Activated CD4-positive, alpha-beta memory T cell treated with anti-CD3 and anti-CD28 coated beads for 36 hours (primary cell): ENCODE measurements at regions of chr1 and their contacts with region 1.

Region 1: DNA sequence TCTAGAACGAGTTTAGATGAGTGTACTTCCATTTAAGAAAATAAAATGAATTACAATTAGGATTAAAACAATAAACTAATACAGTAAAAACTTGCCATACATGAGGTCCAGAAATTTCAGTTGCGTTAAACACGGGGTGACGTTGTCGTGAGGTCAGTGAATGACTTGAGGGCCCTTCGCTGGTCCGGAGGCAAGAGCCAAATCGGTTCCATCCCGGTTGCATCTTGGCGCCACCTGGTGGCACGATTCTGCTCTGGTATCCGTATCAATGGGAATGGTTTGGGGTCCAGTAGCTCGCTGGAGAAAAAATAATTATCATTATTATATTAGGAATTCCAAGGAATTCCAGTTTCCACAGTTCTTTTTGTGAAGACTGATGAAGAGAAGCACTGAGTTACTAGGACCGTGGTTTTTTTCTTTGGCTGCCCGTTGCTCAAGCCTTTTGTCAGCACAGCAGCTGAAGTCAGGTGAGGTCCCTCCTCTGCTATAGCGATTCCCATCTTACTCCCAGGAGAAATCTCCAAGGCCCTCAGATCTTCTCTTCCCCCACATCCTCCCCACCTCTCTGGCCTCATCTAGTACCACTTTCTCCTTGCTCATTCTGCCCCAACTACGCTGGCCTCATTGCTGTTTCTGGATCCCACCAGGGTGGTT is 161.4 kb downstream of the SLC35F3 start:
- DNase-seq: peak; percentile 76
- H3K4me3 Mint-ChIP-seq: no peak overlapping the region
- H3K27ac Mint-ChIP-seq: no peak overlapping the region
- H3K4me1 Mint-ChIP-seq: no peaks in the 10 kb centered on the region
- H3K27me3 Mint-ChIP-seq: peaks cover 12% of the 10 kb centered on the region

Region 2: GRCh38 chr1:233304489-233305102 is 761.3 kb before region 1 on chr1:
- CTCF ChIA-PET with region 1: interaction called, 18 read pairs
- POLR2A ChIA-PET with region 1: no interaction called
- intact Hi-C with region 1: loop called (anchors 2 kb)
- DNase-seq: no peak
- H3K4me3 Mint-ChIP-seq: no peak overlapping the region
- H3K27ac Mint-ChIP-seq: no peak overlapping the region
- H3K4me1 Mint-ChIP-seq: no peaks in the 10 kb centered on the region
- H3K27me3 Mint-ChIP-seq: peaks cover 1% of the 10 kb centered on the region

Region 3: GRCh38 chr1:233364695-233365539 is 701.0 kb before region 1 on chr1:
- CTCF ChIA-PET with region 1: interaction called, 17 read pairs
- POLR2A ChIA-PET with region 1: no interaction called
- intact Hi-C with region 1: no loop called
- DNase-seq: no peak
- H3K4me3 Mint-ChIP-seq: no peak overlapping the region
- H3K27ac Mint-ChIP-seq: no peak overlapping the region
- H3K4me1 Mint-ChIP-seq: peaks cover 4% of the 10 kb centered on the region
- H3K27me3 Mint-ChIP-seq: peaks cover 2% of the 10 kb centered on the region

Region 4: DNA sequence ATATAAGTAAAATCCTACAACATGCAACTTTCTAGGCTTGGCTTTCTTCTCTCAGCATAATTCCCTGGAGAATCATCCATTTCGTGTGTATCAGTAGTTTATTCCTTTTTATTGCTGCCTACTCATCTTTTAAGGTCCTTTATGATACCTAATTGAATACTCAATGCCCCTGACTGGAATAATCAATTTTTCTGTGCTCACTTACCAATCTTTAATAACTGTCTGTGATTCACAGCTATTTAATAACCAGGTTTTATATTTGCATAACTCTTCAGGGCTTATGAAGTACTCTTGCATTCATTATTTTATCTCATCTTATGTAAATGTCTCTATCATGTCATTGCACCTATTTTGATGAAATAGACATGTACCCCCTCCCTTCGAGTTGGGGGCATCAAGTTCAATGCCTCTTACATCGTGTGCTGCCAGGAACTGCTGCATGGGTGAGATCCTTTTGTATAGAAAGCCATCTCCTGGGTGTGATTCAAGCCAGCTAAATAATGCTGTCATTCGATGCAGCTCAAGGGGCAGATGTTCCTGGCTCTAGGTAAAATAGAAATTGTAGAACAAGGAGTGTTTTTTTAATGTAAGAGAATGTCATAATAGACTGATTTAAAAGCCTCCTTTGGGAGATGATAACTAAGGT is 61.2 kb after region 1 on chr1:
- CTCF ChIA-PET with region 1: no interaction called
- POLR2A ChIA-PET with region 1: no interaction called
- intact Hi-C with region 1: no loop called
- DNase-seq: no peak
- H3K4me3 Mint-ChIP-seq: no peak overlapping the region
- H3K27ac Mint-ChIP-seq: no peak overlapping the region
- H3K4me1 Mint-ChIP-seq: no peaks in the 10 kb centered on the region
- H3K27me3 Mint-ChIP-seq: peaks cover 27% of the 10 kb centered on the region

Region 5: GRCh38 chr1:234271243-234271606 is 205.3 kb after region 1 on chr1:
- CTCF ChIA-PET with region 1: no interaction called
- POLR2A ChIA-PET with region 1: no interaction called
- intact Hi-C with region 1: no loop called
- DNase-seq: no peak
- H3K4me3 Mint-ChIP-seq: no peak overlapping the region
- H3K27ac Mint-ChIP-seq: no peak overlapping the region
- H3K4me1 Mint-ChIP-seq: peaks cover 32% of the 10 kb centered on the region
- H3K27me3 Mint-ChIP-seq: peaks cover 30% of the 10 kb centered on the region